Panc1 (cell line): ENCODE measurements at regions of chr19 and their contacts with region 1.

Region 1: GRCh38 chr19:41324921-41325639 is 15.1 kb downstream of the CCDC97 start:
- DNase-seq: no peak
- ATAC-seq: peak; percentile 64
- H3K4me3 ChIP-seq: peak overlapping the region in 1 of 2 experiments; percentile 33; a peak in 2 of 4 replicates
- H3K27ac ChIP-seq: peak overlapping the region; percentile 71
- H3K4me1 ChIP-seq: peaks cover 51% of the 10 kb centered on the region
- H3K27me3 ChIP-seq: no peaks in the 10 kb centered on the region
- CTCF ChIP-seq: no peak

Region 2: DNA sequence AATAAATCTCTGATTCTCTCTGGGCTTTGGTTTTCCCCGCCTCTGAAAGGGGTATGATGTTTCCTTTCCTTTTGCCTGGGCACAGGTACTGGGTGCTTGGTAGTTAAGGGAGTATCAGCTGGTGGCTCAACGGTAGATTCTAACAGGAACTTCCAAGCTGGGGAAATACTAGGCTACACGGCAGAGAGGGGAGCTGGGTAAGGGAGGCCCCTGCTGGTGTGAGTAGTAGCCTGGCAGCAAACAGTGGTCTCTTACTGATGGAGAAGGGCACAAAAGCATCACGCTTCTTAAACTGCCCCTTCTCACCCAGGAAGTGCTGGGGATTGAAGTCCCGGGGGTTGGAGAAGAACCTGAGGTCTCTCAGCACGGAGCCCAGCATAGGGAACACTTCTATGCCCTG is 416.1 kb before region 1 on chr19:
- CTCF ChIA-PET with region 1: no interaction called
- POLR2A ChIA-PET with region 1: no interaction called
- in situ Hi-C with region 1: no loop called
- intact Hi-C with region 1: no loop called
- DNase-seq: no peak
- ATAC-seq: no peak
- H3K4me3 ChIP-seq: no peak overlapping the region
- H3K27ac ChIP-seq: no peak overlapping the region
- H3K4me1 ChIP-seq: no peaks in the 10 kb centered on the region
- H3K27me3 ChIP-seq: no peaks in the 10 kb centered on the region
- CTCF ChIP-seq: no peak

Region 3: GRCh38 chr19:41276231-41276630 is 48.8 kb before region 1 on chr19:
- CTCF ChIA-PET with region 1: no interaction called
- POLR2A ChIA-PET with region 1: no interaction called
- in situ Hi-C with region 1: no loop called
- intact Hi-C with region 1: no loop called
- DNase-seq: no peak
- ATAC-seq: no peak
- H3K4me3 ChIP-seq: no peak overlapping the region
- H3K27ac ChIP-seq: no peak overlapping the region
- H3K4me1 ChIP-seq: no peaks in the 10 kb centered on the region
- H3K27me3 ChIP-seq: no peaks in the 10 kb centered on the region
- CTCF ChIP-seq: no peak

Region 4: DNA sequence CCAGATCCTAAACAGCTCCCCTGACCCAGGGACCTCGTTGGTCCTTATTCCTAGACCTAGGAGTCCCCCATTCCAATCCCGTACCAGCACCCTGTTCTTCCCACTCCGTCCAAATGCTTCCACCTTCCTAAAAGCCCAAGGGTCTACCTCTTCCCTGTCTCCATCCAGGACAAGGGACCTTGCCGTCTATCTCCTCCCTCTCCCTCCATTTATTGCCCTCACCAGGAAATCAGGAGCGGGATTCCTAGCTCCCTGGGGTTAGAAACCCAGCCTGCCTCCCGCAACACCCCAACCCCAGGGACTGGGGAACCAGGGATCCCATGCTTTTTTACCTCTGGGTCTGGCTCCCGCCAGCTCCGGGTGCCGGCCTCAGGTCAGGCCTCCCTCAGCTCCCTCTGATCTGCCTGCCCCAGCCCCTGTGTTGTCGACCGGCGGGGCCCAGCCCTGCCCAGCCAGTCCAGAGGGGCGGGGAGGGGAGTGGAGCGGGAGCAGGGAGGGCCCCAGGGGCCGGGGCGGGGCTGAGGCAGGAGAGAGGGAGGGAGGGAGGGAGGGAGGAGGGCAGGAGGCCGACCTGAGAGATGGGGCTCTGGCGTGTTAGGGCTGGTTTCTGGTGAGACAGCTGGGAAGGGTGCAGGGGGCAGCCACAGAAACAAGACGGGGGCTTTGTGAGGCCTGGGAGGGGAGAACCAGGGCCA is 102.0 kb after region 1 on chr19 and contains the start of gene B3GNT8:
- CTCF ChIA-PET with region 1: interaction called, 10 read pairs
- POLR2A ChIA-PET with region 1: no interaction called
- in situ Hi-C with region 1: no loop called
- intact Hi-C with region 1: no loop called
- DNase-seq: no peak
- ATAC-seq: peak; percentile 57
- H3K4me3 ChIP-seq: no peak within 1 kb of the TSS
- H3K27ac ChIP-seq: no peak within 1 kb of the TSS
- H3K4me1 ChIP-seq: no peaks in the 10 kb centered on the region
- H3K27me3 ChIP-seq: no peaks in the 10 kb centered on the region
- CTCF ChIP-seq: no peak
- total RNA-seq, gene B3GNT8: 0.10 TPM